ENCODE measurements at regions of chr6 and their contacts with region 1.

Region 1: DNA sequence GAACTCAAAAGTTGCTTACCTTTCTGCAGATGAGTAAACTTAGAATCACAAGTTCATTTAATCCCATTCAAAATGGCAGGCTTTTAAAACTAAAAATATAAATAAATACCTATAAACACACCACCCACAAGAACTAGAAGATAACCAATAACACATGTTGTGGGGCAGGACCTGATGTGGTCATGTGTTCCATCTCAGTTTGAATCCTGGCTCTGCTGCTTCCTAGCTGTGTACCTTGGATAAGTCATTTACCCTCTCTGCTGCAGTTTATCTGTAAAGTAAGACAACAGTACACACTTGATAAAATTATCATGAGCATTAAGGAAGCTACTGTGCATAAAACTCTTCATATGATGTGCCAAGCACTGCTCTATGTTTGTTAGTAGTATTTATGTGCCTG is 22.0 kb downstream of the TRIM27 start:
- DNase-seq: no peak
- ATAC-seq: no peak
- H3K4me3 ChIP-seq: no peak overlapping the region
- H3K27ac ChIP-seq: no peak overlapping the region
- H3K4me1 ChIP-seq: peaks cover 5% of the 10 kb centered on the region; the same call in 1 of the 2 replicates
- H3K27me3 ChIP-seq: no peaks in the 10 kb centered on the region
- CTCF ChIP-seq: no peak

Region 2: DNA sequence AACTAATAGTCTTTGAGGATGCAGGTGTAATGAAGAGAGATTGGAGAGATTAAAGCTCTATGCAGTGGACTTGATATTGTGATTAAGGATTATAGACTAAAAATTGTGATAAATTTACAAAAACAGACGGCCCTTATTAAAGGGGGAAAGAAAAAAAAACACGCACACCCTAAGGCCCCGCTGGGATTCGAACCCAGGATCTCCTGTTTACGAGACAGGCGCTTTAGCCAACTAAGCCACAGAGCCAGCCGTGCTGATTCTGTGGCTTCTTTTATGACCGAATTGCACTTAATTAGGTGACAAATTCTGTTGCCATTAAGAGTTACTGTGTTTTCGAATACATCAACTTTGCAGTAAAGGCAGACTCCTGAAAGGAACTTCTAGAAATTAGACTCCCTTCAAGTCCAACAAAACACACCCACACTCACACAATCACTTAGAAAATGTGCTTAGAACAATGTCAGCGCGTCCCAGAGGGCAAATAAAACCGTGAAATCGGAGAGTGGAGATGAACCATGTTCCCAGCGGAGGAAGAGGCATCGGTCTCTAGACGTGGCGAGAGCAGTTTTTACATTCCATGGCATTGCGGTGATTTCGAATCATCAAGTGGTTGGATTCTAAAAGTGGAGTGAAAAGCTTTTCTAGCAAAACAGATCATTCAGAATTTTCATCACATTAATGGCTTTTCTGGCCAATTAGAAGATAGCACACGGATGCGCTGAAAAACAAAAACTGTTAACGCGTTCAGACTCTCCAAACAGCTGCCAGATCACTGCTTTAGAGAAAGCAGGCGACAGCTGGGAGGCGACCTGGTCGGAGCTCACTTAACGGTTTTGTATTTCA is 253.6 kb before region 1 on chr6:
- CTCF ChIA-PET with region 1: no interaction called
- POLR2A ChIA-PET with region 1: no interaction called
- in situ Hi-C with region 1: no loop called
- intact Hi-C with region 1: no loop called
- DNase-seq: peak; percentile 90
- ATAC-seq: peak; percentile 91
- H3K4me3 ChIP-seq: peak overlapping the region; percentile 91 to 99
- H3K27ac ChIP-seq: peak overlapping the region; percentile 93
- H3K4me1 ChIP-seq: peaks cover 4% of the 10 kb centered on the region
- H3K27me3 ChIP-seq: no peaks in the 10 kb centered on the region
- CTCF ChIP-seq: no peak

Region 3: DNA sequence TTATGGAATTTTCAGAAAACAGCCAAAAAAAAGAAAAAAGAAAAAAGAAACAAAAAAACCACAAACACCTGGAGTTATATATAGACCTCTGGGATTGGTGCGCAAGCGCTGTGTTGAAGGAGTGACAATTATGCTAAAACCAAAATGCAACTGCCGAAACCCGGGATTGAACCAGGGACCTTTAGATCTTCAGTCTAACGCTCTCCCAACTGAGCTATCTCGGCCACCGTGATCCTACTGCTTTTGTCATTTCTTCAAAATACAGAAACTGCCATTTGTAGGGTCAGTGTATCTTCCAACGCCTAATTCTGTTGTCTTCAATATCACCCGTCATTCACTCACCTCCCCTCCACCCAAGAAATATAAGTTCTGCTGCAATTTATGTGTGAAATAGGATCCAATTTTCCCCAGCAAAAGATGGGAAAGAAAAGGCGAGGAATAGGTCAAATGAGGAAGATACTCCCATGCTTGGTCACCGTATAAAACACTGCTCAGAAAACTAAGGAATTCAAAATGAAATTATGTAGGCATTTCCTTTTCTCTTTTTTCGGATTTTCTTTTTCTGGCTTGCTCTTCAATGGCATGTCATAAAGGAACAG is 94.0 kb before region 1 on chr6:
- CTCF ChIA-PET with region 1: no interaction called
- POLR2A ChIA-PET with region 1: no interaction called
- in situ Hi-C with region 1: no loop called
- intact Hi-C with region 1: no loop called
- DNase-seq: no peak
- ATAC-seq: peak; percentile 67
- H3K4me3 ChIP-seq: peak overlapping the region; percentile 73 to 97
- H3K27ac ChIP-seq: peak overlapping the region; percentile 30
- H3K4me1 ChIP-seq: peaks cover 23% of the 10 kb centered on the region
- H3K27me3 ChIP-seq: no peaks in the 10 kb centered on the region; the same call in 1 of the 2 replicates
- CTCF ChIP-seq: no peak

Region 4: GRCh38 chr6:28953039-28953584 is 51.3 kb after region 1 on chr6:
- CTCF ChIA-PET with region 1: no interaction called
- POLR2A ChIA-PET with region 1: interaction called, 14 read pairs
- in situ Hi-C with region 1: no loop called
- intact Hi-C with region 1: no loop called
- DNase-seq: no peak
- ATAC-seq: peak; percentile 80
- H3K4me3 ChIP-seq: peak overlapping the region; percentile 83 to 88
- H3K27ac ChIP-seq: peak overlapping the region; percentile 67
- H3K4me1 ChIP-seq: peaks cover 6% of the 10 kb centered on the region
- H3K27me3 ChIP-seq: no peaks in the 10 kb centered on the region
- CTCF ChIP-seq: no peak

Region 5: DNA sequence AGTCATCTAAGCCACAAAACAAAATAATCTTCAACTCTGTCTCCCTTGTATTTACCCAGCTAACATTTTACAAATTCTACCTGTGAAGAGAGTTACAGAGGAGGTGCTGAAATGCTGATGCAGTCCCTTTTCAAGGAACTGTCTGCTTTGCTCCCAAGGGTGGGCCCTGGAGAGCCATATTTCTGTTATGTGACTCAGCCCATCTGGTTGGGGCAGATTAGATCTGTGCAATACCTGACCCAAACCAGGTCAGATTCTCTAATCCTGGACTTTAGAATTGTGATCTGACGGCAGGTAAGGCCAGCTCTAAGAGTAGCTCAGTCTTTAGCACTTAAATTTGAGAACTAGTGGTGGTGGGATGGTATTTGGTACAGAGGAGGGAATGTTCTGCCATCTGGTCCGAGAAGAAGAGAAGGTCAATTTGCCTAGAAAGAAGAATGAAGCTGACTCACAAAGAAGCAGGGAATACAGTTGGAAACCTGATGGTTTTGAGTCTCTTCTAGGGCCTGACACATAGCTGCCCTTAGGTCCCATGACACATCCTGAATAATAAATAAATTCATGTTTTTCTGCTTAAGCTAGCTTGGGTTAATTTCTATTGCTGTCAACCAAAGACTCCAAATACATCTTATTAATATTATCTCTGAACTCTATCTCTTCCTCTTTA is 95.1 kb after region 1 on chr6:
- CTCF ChIA-PET with region 1: no interaction called
- POLR2A ChIA-PET with region 1: no interaction called
- in situ Hi-C with region 1: no loop called
- intact Hi-C with region 1: no loop called
- DNase-seq: no peak
- ATAC-seq: no peak
- H3K4me3 ChIP-seq: no peak overlapping the region
- H3K27ac ChIP-seq: no peak overlapping the region
- H3K4me1 ChIP-seq: no peaks in the 10 kb centered on the region
- H3K27me3 ChIP-seq: no peaks in the 10 kb centered on the region; the same call in 1 of the 2 replicates
- CTCF ChIP-seq: no peak